Activated CD4-positive, alpha-beta T cell treated with anti-CD3 and anti-CD28 coated beads, Interleukin-2, amount 10 ng/mL, durations not matched to agents 24 days and 14 days (primary cell): ENCODE measurements at regions of chr20 and their contacts with region 1.

Region 1: GRCh38 chr20:63707549-63708300 is at the starts of genes ARFRP1 and ZGPAT:
- DNase-seq: peak; percentile 97
- H3K4me3 Mint-ChIP-seq: peak within 1 kb of the TSS; percentile 95
- H3K27ac Mint-ChIP-seq: peak within 1 kb of the TSS; percentile 84
- H3K4me1 Mint-ChIP-seq: peaks cover 27% of the 10 kb centered on the region
- H3K27me3 Mint-ChIP-seq: no peaks in the 10 kb centered on the region
- total RNA-seq, gene ARFRP1: 63.4 and 70.4 TPM in 2 replicates
- total RNA-seq, gene ZGPAT: 37.3 and 38.1 TPM in 2 replicates

Region 2: GRCh38 chr20:63657937-63658748 is 49.6 kb before region 1 on chr20 and contains the start of gene RTEL1:
- intact Hi-C with region 1: loop called (anchors 1 kb)
- DNase-seq: peak; percentile 98
- H3K4me3 Mint-ChIP-seq: peak within 1 kb of the TSS; percentile 93
- H3K27ac Mint-ChIP-seq: peak within 1 kb of the TSS; percentile 89
- H3K4me1 Mint-ChIP-seq: peaks cover 34% of the 10 kb centered on the region
- H3K27me3 Mint-ChIP-seq: peaks cover 2% of the 10 kb centered on the region
- total RNA-seq, gene RTEL1: 60.7 and 64.7 TPM in 2 replicates

Region 3: GRCh38 chr20:63739130-63740069 is 31.7 kb after region 1 on chr20 and contains the start of gene SLC2A4RG:
- intact Hi-C with region 1: loop called (anchors 5 kb)
- DNase-seq: peak; percentile 93
- H3K4me3 Mint-ChIP-seq: peak within 1 kb of the TSS; percentile 59
- H3K27ac Mint-ChIP-seq: no peak within 1 kb of the TSS
- H3K4me1 Mint-ChIP-seq: peaks cover 15% of the 10 kb centered on the region
- H3K27me3 Mint-ChIP-seq: no peaks in the 10 kb centered on the region
- total RNA-seq, gene SLC2A4RG: 41.0 and 43.6 TPM in 2 replicates

Region 4: DNA sequence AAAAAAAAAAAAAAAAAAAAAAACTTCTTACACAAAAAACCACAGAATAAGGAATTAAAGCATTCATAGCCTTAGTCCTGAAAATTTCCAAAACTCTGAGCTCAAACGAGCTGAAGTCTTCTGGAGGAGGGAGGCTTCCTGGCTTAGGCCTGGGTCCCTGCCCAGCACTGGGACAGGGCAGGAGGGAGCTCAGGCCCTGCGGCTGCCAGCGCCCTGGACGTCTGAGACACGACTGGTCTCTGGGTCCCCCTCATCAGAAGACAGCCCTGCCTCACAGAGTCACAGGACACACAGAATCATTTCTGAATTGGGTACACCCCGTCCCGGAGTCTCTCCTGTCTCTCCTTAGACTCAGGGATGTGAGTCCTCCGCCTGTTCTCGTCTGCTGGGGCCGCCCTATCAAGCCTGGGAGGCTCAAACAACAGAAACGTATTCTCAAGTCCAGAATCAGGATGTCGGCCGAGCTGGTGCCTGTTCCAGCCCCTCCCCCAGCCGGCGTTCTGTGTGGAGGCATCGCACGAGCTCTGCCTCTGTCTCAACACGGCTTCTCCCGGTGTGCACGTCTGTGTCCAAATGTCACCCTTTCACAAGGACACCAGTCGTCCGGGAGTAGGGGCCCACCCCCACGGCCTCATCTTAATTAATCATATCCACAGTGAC is 83.9 kb after region 1 on chr20:
- intact Hi-C with region 1: loop called (anchors 1 kb)
- DNase-seq: no peak
- H3K4me3 Mint-ChIP-seq: no peak overlapping the region
- H3K27ac Mint-ChIP-seq: no peak overlapping the region
- H3K4me1 Mint-ChIP-seq: peaks cover 5% of the 10 kb centered on the region
- H3K27me3 Mint-ChIP-seq: peaks cover 19% of the 10 kb centered on the region

Region 5: GRCh38 chr20:63864847-63865640 is 157.3 kb after region 1 on chr20 and contains the start of gene TPD52L2:
- intact Hi-C with region 1: loop called (anchors 1 kb)
- DNase-seq: peak; percentile 99
- H3K4me3 Mint-ChIP-seq: peak within 1 kb of the TSS; percentile 87
- H3K27ac Mint-ChIP-seq: peak within 1 kb of the TSS; percentile 100
- H3K4me1 Mint-ChIP-seq: peaks cover 25% of the 10 kb centered on the region
- H3K27me3 Mint-ChIP-seq: no peaks in the 10 kb centered on the region
- total RNA-seq, gene TPD52L2: 75.9 and 78.8 TPM in 2 replicates

Region 6: GRCh38 chr20:63955827-63956663 is 248.3 kb after region 1 on chr20 and contains the start of gene UCKL1:
- intact Hi-C with region 1: loop called (anchors 5 kb)
- DNase-seq: peak; percentile 97
- H3K4me3 Mint-ChIP-seq: peak within 1 kb of the TSS; percentile 85
- H3K27ac Mint-ChIP-seq: peak within 1 kb of the TSS; percentile 88
- H3K4me1 Mint-ChIP-seq: peaks cover 28% of the 10 kb centered on the region
- H3K27me3 Mint-ChIP-seq: no peaks in the 10 kb centered on the region
- total RNA-seq, gene UCKL1: 48.1 and 49.5 TPM in 2 replicates

Region 7: DNA sequence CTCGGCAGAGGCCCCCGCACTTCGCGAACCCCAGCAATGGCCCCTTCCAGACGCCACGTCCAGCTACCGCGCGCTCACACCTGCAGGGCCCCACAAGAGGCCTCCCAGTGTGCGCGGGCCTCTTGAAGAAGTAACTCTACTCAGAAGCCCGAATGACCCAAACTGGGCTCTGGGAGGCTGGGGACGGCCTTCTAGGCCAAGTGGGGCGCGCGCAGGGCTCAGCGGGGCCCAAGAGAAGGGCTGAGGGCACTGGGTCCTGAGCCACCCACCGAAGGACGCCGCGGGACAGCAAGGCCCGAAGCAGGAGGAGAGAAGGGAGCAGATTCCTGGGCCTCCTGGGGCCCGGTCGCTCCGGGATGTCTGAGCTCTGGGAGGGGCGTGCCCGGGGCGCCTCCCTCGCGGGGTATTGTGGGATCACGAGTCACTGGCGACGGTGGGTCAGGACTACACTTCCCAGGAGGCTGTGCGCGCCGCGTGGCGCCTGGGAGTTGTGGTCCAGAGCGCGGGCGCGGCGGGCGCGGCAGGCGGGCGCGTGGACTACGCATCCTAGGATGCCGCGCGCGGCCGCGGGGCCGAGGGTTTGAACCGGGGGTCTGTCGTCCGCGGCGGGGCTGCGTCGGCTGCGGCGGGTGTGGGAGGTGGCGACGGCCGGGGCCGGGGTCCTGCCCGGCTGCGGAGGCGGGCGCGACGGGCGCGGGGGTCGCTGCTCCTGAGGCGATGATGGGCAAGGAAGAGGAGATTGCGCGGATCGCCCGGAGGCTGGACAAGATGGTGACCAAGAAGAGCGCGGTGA is 355.1 kb after region 1 on chr20 and contains the start of gene TCEA2:
- intact Hi-C with region 1: loop called (anchors 5 kb)
- DNase-seq: peak; percentile 99
- H3K4me3 Mint-ChIP-seq: peak within 1 kb of the TSS; percentile 95
- H3K27ac Mint-ChIP-seq: peak within 1 kb of the TSS; percentile 91
- H3K4me1 Mint-ChIP-seq: peaks cover 54% of the 10 kb centered on the region
- H3K27me3 Mint-ChIP-seq: no peaks in the 10 kb centered on the region
- total RNA-seq, gene TCEA2: 35.4 and 36.8 TPM in 2 replicates